Endothelial cell of umbilical vein (primary cell): ENCODE measurements at regions of chr15 and their contacts with region 1.

Region 1: GRCh38 chr15:95557226-95558046 is 773.1 kb upstream of the NR2F2 start:
- DNase-seq: peak; percentile 96
- H3K4me3 ChIP-seq: peak overlapping the region in 1 of 3 experiments; percentile 10
- H3K27ac ChIP-seq: peak overlapping the region; percentile 100
- H3K4me1 ChIP-seq: peaks cover 39% of the 10 kb centered on the region
- H3K27me3 ChIP-seq: no peaks in the 10 kb centered on the region
- CTCF ChIP-seq: no peak
- POLR2A ChIP-seq: no peak

Region 2: GRCh38 chr15:95175914-95176658 is 381.4 kb before region 1 on chr15:
- CTCF ChIA-PET with region 1: no interaction called
- POLR2A ChIA-PET with region 1: no interaction called
- dilution Hi-C with region 1: no loop called
- intact Hi-C with region 1: loop called (anchors 2 kb)
- DNase-seq: peak; percentile 94
- H3K4me3 ChIP-seq: no peak overlapping the region
- H3K27ac ChIP-seq: peak overlapping the region; percentile 95
- H3K4me1 ChIP-seq: peaks cover 30% of the 10 kb centered on the region
- H3K27me3 ChIP-seq: no peaks in the 10 kb centered on the region
- CTCF ChIP-seq: no peak
- POLR2A ChIP-seq: no peak

Region 3: GRCh38 chr15:95365511-95366107 is 191.8 kb before region 1 on chr15:
- CTCF ChIA-PET with region 1: no interaction called
- POLR2A ChIA-PET with region 1: no interaction called
- dilution Hi-C with region 1: no loop called
- intact Hi-C with region 1: loop called (anchors 1 kb)
- DNase-seq: peak; percentile 100
- H3K4me3 ChIP-seq: no peak overlapping the region
- H3K27ac ChIP-seq: peak overlapping the region; percentile 98
- H3K4me1 ChIP-seq: peaks cover 37% of the 10 kb centered on the region
- H3K27me3 ChIP-seq: no peaks in the 10 kb centered on the region
- CTCF ChIP-seq: no peak
- POLR2A ChIP-seq: peak; percentile 87

Region 4: DNA sequence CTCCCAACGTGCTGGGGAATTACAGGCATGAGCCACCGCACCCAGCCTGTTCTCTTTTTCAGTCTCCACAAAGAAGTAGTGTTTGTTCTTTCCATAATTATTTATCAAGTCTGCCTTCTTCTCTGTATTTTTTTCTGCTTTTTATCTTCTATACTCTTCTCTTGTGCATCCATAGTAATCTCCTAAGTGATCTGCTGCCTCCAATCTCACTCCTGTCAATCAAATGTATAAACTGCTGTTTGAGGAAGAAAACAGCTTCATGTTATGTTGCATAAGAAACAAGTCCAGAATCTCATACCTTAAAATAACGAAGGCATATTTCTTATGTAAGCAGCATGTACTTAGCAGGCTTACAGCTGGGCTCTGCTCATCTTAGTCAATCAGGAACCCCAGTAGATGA is 28.5 kb before region 1 on chr15:
- CTCF ChIA-PET with region 1: no interaction called
- POLR2A ChIA-PET with region 1: no interaction called
- dilution Hi-C with region 1: no loop called
- intact Hi-C with region 1: loop called (anchors 1 kb)
- DNase-seq: no peak
- H3K4me3 ChIP-seq: no peak overlapping the region
- H3K27ac ChIP-seq: no peak overlapping the region
- H3K4me1 ChIP-seq: no peaks in the 10 kb centered on the region
- H3K27me3 ChIP-seq: no peaks in the 10 kb centered on the region
- CTCF ChIP-seq: no peak
- POLR2A ChIP-seq: no peak

Region 5: GRCh38 chr15:95734422-95735316 is 177.2 kb after region 1 on chr15:
- CTCF ChIA-PET with region 1: no interaction called
- POLR2A ChIA-PET with region 1: no interaction called
- dilution Hi-C with region 1: no loop called
- intact Hi-C with region 1: loop called (anchors 1 kb)
- DNase-seq: peak; percentile 96
- H3K4me3 ChIP-seq: no peak overlapping the region
- H3K27ac ChIP-seq: peak overlapping the region; percentile 70
- H3K4me1 ChIP-seq: peaks cover 28% of the 10 kb centered on the region
- H3K27me3 ChIP-seq: no peaks in the 10 kb centered on the region
- CTCF ChIP-seq: no peak
- POLR2A ChIP-seq: peak; percentile 50

Region 6: DNA sequence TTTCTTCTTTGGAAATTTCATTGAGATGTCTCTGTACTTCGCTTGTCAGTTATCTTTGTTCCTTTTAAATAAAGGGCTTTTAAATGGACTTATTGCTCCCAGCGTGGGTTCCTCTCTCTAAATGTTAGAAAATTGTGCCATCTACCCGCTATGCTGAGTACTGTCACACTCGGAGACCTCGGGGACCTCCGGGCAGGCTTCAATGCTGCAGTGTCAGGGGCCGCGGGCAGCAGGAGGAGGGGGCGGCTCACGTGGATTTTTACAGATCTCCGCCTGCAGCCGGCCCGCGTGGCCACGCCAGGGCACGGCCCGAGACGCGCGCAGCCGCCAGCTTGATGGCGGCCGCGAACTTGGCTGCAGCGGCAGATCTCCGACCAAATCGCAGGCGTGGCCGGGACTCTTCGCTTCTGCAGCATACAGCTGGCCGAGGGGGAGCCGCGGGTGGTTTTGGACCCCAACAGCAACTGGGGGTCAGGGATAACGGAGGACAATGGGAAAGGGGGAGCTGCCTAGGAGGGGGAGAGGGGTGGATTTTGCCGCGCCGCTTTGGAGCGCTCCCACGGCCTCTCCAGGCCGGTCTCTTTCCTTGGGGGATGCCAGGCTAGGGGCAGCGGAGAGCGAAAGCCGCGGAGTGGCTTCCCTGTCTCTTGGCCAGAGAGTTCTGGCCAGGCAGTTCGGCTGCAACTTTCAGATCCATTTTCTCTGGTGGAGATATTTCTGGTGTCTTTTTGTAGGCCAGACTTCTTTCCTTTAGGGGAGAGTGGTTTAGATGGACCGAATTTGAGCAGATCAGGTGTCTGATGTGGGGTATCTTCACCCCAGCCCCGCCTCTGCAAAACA is 788.3 kb after region 1 on chr15:
- CTCF ChIA-PET with region 1: interaction called, 3 read pairs
- POLR2A ChIA-PET with region 1: no interaction called
- dilution Hi-C with region 1: no loop called
- intact Hi-C with region 1: loop called (anchors 5 kb)
- DNase-seq: peak; percentile 86
- H3K4me3 ChIP-seq: peak overlapping the region; percentile 16 to 99 (median 74)
- H3K27ac ChIP-seq: peak overlapping the region; percentile 87
- H3K4me1 ChIP-seq: peaks cover 83% of the 10 kb centered on the region
- H3K27me3 ChIP-seq: no peaks in the 10 kb centered on the region
- CTCF ChIP-seq: peak; percentile 22 to 33
- POLR2A ChIP-seq: no peak